ENCODE measurements at regions of chr9 and their contacts with region 1.

Region 1: GRCh38 chr9:72592502-72593403 is 71.3 kb downstream of the TMC1 start:
- DNase-seq: no peak
- H3K4me3 ChIP-seq: no peak overlapping the region
- H3K27ac ChIP-seq: no peak overlapping the region
- H3K4me1 ChIP-seq: peaks cover 0 to 41% (median 24%) of the 10 kb centered on the region in 4 donors
- H3K27me3 ChIP-seq: no peaks in the 10 kb centered on the region
- CTCF ChIP-seq: peak; percentile 67 to 87 (median 80)
- EP300 ChIP-seq: no peak
- POLR2A ChIP-seq: no peak

Region 2: GRCh38 chr9:72292256-72292682 is 300.5 kb before region 1 on chr9:
- intact Hi-C with region 1: loop called (anchors 1 kb)
- DNase-seq: no peak
- H3K4me3 ChIP-seq: no peak overlapping the region
- H3K27ac ChIP-seq: peak overlapping the region in 1 of 4 donors; percentile 42
- H3K4me1 ChIP-seq: peaks cover 0 to 22% (median 12%) of the 10 kb centered on the region in 4 donors
- H3K27me3 ChIP-seq: no peaks in the 10 kb centered on the region
- CTCF ChIP-seq: peak; percentile 38 to 77 (median 56)
- EP300 ChIP-seq: no peak
- POLR2A ChIP-seq: no peak

Region 3: DNA sequence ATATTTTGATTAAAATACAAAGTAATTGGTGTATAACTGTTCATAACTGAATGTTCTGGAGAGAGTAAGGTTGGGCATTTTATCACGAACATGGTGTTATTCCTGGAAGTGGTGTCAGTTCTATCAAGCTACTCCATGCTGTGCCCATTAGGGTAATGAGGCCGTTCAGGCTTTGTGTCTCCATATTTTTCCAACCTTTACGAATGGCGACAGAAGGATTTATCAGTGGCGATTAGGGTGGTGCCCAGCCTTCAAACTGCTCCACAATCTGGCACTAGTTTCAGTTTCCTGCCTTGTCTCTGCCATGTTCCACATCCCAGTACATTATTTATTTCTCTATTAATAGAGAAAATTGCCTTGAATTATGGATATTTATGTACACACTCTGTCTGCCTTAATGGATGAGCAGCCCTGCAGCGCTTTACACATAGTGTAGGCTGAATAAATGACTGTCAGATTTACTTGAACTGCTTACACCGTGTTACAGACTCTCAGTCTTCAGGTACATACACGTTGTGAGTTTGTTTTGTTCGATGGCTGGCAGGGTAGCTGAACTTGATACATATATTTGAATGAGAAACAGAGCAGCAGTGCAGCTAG is 95.2 kb before region 1 on chr9:
- intact Hi-C with region 1: no loop called
- DNase-seq: no peak
- H3K4me3 ChIP-seq: no peak overlapping the region
- H3K27ac ChIP-seq: no peak overlapping the region
- H3K4me1 ChIP-seq: no peaks in the 10 kb centered on the region
- H3K27me3 ChIP-seq: no peaks in the 10 kb centered on the region
- CTCF ChIP-seq: no peak
- EP300 ChIP-seq: no peak
- POLR2A ChIP-seq: no peak

Region 4: GRCh38 chr9:72526901-72527800 is 65.6 kb before region 1 on chr9:
- intact Hi-C with region 1: loop called (anchors 5 kb)
- DNase-seq: peak; percentile 93
- H3K4me3 ChIP-seq: peak overlapping the region in 3 of 4 donors; percentile 27 to 30 (median 28)
- H3K27ac ChIP-seq: peak overlapping the region; percentile 62 to 78 (median 71)
- H3K4me1 ChIP-seq: peaks cover 0 to 34% (median 20%) of the 10 kb centered on the region in 4 donors
- H3K27me3 ChIP-seq: no peaks in the 10 kb centered on the region
- CTCF ChIP-seq: no peak
- EP300 ChIP-seq: no peak
- POLR2A ChIP-seq: peak in 1 of 2 donors; percentile 26

Region 5: GRCh38 chr9:72871685-72872084 is 278.9 kb after region 1 on chr9:
- intact Hi-C with region 1: no loop called
- DNase-seq: no peak
- H3K4me3 ChIP-seq: no peak overlapping the region
- H3K27ac ChIP-seq: peak overlapping the region in 3 of 4 donors; percentile 7 to 72 (median 57)
- H3K4me1 ChIP-seq: peaks cover 0 to 46% (median 33%) of the 10 kb centered on the region in 4 donors
- H3K27me3 ChIP-seq: no peaks in the 10 kb centered on the region
- CTCF ChIP-seq: peak; percentile 31 to 44 (median 42)
- EP300 ChIP-seq: no peak
- POLR2A ChIP-seq: no peak

Measured in sigmoid colon (tissue), 7 donors.